CD4-positive, alpha-beta T cell (primary cell): ENCODE measurements at regions of chr10 and their contacts with region 1.

Region 1: DNA sequence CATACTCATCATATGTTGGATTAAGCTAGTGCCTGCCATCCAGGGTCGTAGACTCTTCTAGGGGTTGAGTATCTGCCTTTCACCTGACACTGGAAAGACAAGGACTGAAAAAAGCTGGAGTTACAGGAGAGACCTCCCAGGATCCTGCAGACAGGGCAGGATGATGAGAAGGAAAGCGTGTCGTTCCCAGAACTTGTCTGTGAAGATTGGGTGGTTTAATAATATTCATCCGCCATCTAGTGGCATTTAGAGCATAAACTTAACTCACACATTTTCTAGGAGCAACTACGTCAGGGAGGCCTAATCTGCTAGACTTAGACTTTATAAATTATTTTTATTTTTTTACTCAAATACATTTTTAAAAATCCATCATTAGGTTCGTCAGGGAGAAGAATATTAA is 59.6 kb downstream of the ADRB1 start:
- DNase-seq: peak in 3 of 14 experiments; percentile 52 to 62 (median 59)
- ATAC-seq: no peak
- H3K4me3 ChIP-seq: no peak overlapping the region
- H3K4me3 Mint-ChIP-seq: no peak overlapping the region
- H3K27ac ChIP-seq: no peak overlapping the region
- H3K27ac Mint-ChIP-seq: no peak overlapping the region
- H3K4me1 ChIP-seq: peaks cover 20% of the 10 kb centered on the region
- H3K4me1 Mint-ChIP-seq: peaks cover 31% of the 10 kb centered on the region
- H3K27me3 ChIP-seq: peaks cover 15 to 19% of the 10 kb centered on the region in 2 experiments
- H3K27me3 Mint-ChIP-seq: peaks cover 44% of the 10 kb centered on the region
- CTCF ChIP-seq: peak; percentile 65

Region 2: DNA sequence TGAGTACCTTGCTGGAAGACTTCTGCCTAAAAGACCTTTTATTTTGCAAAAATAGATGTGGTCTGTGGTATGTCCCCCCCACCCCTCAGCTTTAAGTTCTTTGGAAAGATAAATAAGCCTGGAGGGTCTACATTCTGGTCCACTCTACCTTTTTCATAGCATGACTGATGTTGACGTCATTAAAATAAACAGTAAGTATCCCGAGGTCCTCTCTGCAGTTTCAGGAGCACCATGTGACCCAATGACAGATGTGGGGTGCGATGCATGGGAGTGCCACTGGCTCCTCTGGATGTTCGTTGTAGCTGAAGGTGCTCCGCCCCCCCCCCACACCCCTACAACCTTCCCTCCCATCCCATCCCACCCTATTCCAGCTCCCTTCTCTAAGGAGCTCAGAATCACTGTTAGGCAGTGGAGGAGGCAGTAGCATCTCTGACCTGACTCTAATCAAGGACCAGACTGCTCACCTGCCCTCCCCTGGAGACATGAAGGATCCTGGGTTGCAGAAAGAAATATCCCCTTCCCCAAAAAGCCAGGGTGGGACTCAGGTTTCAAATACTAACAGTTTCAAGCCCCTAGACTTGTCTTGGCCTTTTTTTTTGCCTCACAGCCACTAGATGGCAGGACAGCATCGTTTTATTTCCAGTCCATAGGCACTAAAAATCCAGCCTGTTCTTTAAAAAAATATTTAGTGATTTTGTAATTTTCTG is 398.5 kb before region 1 on chr10:
- CTCF ChIA-PET with region 1: no interaction called
- POLR2A ChIA-PET with region 1: no interaction called
- intact Hi-C with region 1: loop called (anchors 2 kb)
- DNase-seq: peak in 4 of 14 experiments; percentile 22 to 55 (median 40)
- ATAC-seq: no peak
- H3K4me3 ChIP-seq: no peak overlapping the region
- H3K4me3 Mint-ChIP-seq: no peak overlapping the region
- H3K27ac ChIP-seq: no peak overlapping the region
- H3K27ac Mint-ChIP-seq: no peak overlapping the region
- H3K4me1 ChIP-seq: peaks cover 20% of the 10 kb centered on the region
- H3K4me1 Mint-ChIP-seq: peaks cover 36% of the 10 kb centered on the region
- H3K27me3 ChIP-seq: no peaks in the 10 kb centered on the region
- H3K27me3 Mint-ChIP-seq: no peaks in the 10 kb centered on the region
- CTCF ChIP-seq: peak; percentile 36

Region 3: GRCh38 chr10:114234132-114234531 is 130.8 kb after region 1 on chr10:
- CTCF ChIA-PET with region 1: no interaction called
- POLR2A ChIA-PET with region 1: no interaction called
- intact Hi-C with region 1: no loop called
- DNase-seq: no peak
- ATAC-seq: no peak
- H3K4me3 ChIP-seq: no peak overlapping the region
- H3K4me3 Mint-ChIP-seq: no peak overlapping the region
- H3K27ac ChIP-seq: no peak overlapping the region
- H3K27ac Mint-ChIP-seq: no peak overlapping the region
- H3K4me1 ChIP-seq: peaks cover 2% of the 10 kb centered on the region
- H3K4me1 Mint-ChIP-seq: no peaks in the 10 kb centered on the region
- H3K27me3 ChIP-seq: peaks cover 17 to 35% of the 10 kb centered on the region in 2 experiments
- H3K27me3 Mint-ChIP-seq: peaks cover 66% of the 10 kb centered on the region
- CTCF ChIP-seq: no peak